ENCODE measurements at regions of chr10 and their contacts with region 1.

Region 1: GRCh38 chr10:4767033-4767814 is 58.8 kb upstream of the AKR1E2 start:
- DNase-seq: no peak
- H3K4me3 ChIP-seq: no peak overlapping the region
- H3K27ac ChIP-seq: peak overlapping the region in 3 of 4 donors; percentile 6 to 49 (median 20)
- H3K4me1 ChIP-seq: peaks cover 28 to 40% (median 30%) of the 10 kb centered on the region in 4 donors
- H3K27me3 ChIP-seq: no peaks in the 10 kb centered on the region
- CTCF ChIP-seq: peak; percentile 76 to 85 (median 82)
- EP300 ChIP-seq: no peak
- POLR2A ChIP-seq: no peak

Region 2: GRCh38 chr10:3197348-3198003 is 1569.7 kb before region 1 on chr10:
- intact Hi-C with region 1: loop called (anchors 5 kb)
- DNase-seq: no peak
- H3K4me3 ChIP-seq: peak overlapping the region; percentile 10 to 44 (median 10)
- H3K27ac ChIP-seq: peak overlapping the region in 3 of 4 donors; percentile 29 to 43 (median 35)
- H3K4me1 ChIP-seq: peaks cover 10 to 29% (median 22%) of the 10 kb centered on the region in 4 donors
- H3K27me3 ChIP-seq: peaks cover 0 to 3% (median 0%) of the 10 kb centered on the region in 4 donors
- CTCF ChIP-seq: peak; percentile 91 to 98 (median 94)
- EP300 ChIP-seq: no peak
- POLR2A ChIP-seq: no peak

Region 3: GRCh38 chr10:3785257-3785850 is 981.9 kb before region 1 on chr10:
- intact Hi-C with region 1: loop called (anchors 10 kb)
- DNase-seq: peak; percentile 100
- H3K4me3 ChIP-seq: peak overlapping the region; percentile 66 to 97 (median 87)
- H3K27ac ChIP-seq: peak overlapping the region; percentile 97 to 100 (median 99)
- H3K4me1 ChIP-seq: peaks cover 15 to 29% (median 23%) of the 10 kb centered on the region in 4 donors
- H3K27me3 ChIP-seq: no peaks in the 10 kb centered on the region
- CTCF ChIP-seq: no peak
- EP300 ChIP-seq: no peak
- POLR2A ChIP-seq: peak; percentile 99

Region 4: GRCh38 chr10:4353964-4354363 is 413.3 kb before region 1 on chr10:
- intact Hi-C with region 1: loop called (anchors 10 kb)
- DNase-seq: no peak
- H3K4me3 ChIP-seq: no peak overlapping the region
- H3K27ac ChIP-seq: peak overlapping the region; percentile 74 to 78 (median 76)
- H3K4me1 ChIP-seq: peaks cover 20 to 41% (median 35%) of the 10 kb centered on the region in 4 donors
- H3K27me3 ChIP-seq: no peaks in the 10 kb centered on the region
- CTCF ChIP-seq: no peak
- EP300 ChIP-seq: no peak
- POLR2A ChIP-seq: no peak

Region 5: DNA sequence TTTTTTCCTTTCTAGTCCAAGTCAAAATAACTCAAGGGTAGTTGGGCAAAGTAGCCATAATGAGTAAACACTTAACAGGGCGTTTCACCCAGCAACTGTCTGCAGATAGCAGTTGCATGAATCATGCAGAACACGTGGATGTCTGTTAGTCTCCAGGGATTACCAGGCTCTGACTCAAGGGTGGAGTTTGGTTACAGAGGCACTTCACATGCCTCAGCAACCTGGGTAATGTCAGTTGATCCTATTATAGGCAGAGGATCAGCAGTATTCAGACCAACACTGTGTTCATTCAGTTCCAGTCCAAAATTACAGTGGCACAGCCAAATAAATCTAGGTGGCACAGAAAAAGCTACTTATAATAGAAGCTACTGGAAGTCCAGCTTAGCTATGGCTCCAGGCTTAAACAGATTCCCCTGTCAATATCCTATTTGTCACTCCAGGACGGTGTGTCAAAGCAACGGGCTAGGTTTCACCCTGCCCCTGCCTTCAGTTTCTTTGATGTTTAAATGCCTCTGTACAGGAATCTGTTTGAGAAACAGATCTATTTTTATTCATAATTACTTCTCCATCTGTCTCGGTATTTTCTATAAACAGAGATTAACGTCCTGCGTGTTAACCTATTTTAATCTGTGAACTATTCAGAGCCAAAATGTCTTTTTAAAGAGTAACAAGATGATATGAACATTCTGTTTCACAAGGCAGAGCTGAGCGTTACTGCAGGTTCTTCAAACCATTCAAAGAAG is 103.9 kb before region 1 on chr10:
- intact Hi-C with region 1: loop called (anchors 5 kb)
- DNase-seq: no peak
- H3K4me3 ChIP-seq: peak overlapping the region in 3 of 4 donors; percentile 5 to 21 (median 16)
- H3K27ac ChIP-seq: peak overlapping the region; percentile 89 to 92 (median 90)
- H3K4me1 ChIP-seq: peaks cover 42 to 48% (median 44%) of the 10 kb centered on the region in 4 donors
- H3K27me3 ChIP-seq: no peaks in the 10 kb centered on the region
- CTCF ChIP-seq: no peak
- EP300 ChIP-seq: peak; percentile 93
- POLR2A ChIP-seq: no peak

Measured in esophagus muscularis mucosa (tissue), 4 donors.